Activated CD4-positive, alpha-beta T cell treated with anti-CD3 and anti-CD28 coated beads, Interleukin-2, amount 10 ng/mL, durations not matched to agents 24 days and 14 days (primary cell): ENCODE measurements at regions of chr2 and their contacts with region 1.

Region 1: GRCh38 chr2:227406177-227407031 is 18.7 kb upstream of the SCYGR1 start:
- DNase-seq: peak; percentile 59
- H3K4me3 Mint-ChIP-seq: no peak overlapping the region
- H3K27ac Mint-ChIP-seq: peak overlapping the region; percentile 7
- H3K4me1 Mint-ChIP-seq: peaks cover 42% of the 10 kb centered on the region
- H3K27me3 Mint-ChIP-seq: no peaks in the 10 kb centered on the region

Region 2: DNA sequence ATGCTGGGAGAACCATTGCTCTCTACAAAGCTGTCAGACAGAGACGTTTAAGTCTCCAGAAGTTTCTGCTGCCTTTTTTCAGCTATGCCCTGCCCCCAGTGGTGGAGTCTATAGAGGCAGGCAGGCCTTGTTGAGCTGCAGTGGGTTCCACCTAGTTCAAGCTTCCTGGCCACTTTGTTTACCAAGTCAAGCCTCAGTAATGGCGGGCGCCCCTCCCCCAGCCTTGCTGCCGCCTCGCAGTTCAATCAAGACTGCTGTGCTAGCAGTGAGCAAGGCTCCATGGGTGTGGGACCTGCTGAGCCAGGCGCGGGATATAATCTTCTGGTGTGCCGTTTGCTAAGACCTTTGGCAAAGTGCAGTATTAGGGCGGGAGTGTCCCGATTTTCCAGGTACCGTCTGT is 139.6 kb after region 1 on chr2:
- intact Hi-C with region 1: loop called (anchors 5 kb)
- DNase-seq: peak; percentile 67
- H3K4me3 Mint-ChIP-seq: no peak overlapping the region
- H3K27ac Mint-ChIP-seq: no peak overlapping the region
- H3K4me1 Mint-ChIP-seq: peaks cover 13% of the 10 kb centered on the region
- H3K27me3 Mint-ChIP-seq: no peaks in the 10 kb centered on the region